ENCODE measurements at regions of chr11 and their contacts with region 1.

Region 1: DNA sequence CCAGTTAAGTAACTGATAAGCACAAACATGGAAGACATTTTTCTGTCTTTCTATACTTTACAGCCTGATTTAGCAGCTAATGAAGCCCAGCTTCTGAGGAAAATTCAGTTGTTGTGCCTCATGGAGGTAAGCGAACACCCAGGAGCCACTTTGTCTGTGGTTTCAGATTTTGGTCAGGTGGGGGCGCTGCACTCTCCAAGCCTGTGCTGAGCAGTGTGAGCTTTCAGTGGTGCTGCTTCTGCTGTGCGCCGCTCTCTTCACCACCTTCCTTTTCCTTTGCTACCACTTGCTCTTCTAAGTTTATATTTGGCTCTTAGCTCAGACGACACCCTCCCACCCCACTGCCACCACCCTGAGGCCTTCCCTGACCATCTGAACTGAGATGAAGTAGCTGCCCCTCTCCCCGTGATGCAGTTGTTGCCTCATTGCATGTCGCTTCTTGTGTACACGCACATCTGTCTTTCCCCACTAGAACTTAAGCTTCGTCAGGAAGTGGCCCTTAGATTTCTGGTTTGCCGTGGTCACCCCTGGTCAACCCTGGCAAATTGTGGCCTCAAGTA is 14.0 kb downstream of the PSMD13 start:
- DNase-seq: peak; percentile 74 to 89 (median 82)
- ATAC-seq: peak; percentile 100
- H3K4me3 ChIP-seq: no peak overlapping the region
- H3K4me3 Mint-ChIP-seq: peak overlapping the region; percentile 20
- H3K27ac ChIP-seq: no peak overlapping the region
- H3K27ac Mint-ChIP-seq: peak overlapping the region; percentile 76
- H3K4me1 ChIP-seq: peaks cover 6% of the 10 kb centered on the region
- H3K4me1 Mint-ChIP-seq: peaks cover 13% of the 10 kb centered on the region
- H3K27me3 ChIP-seq: no peaks in the 10 kb centered on the region
- H3K27me3 Mint-ChIP-seq: no peaks in the 10 kb centered on the region
- CTCF ChIP-seq: peak; percentile 78

Region 2: GRCh38 chr11:236774-237767 is 13.7 kb before region 1 on chr11 and contains the start of gene PSMD13:
- CTCF ChIA-PET with region 1: interaction called, 11 read pairs
- POLR2A ChIA-PET with region 1: interaction called, 9 read pairs
- intact Hi-C with region 1: no loop called
- DNase-seq: peak; percentile 76 to 94 (median 84)
- ATAC-seq: peak; percentile 79
- H3K4me3 ChIP-seq: peak within 1 kb of the TSS; percentile 91
- H3K4me3 Mint-ChIP-seq: peak within 1 kb of the TSS; percentile 100
- H3K27ac ChIP-seq: peak within 1 kb of the TSS; percentile 97 to 100
- H3K27ac Mint-ChIP-seq: peak within 1 kb of the TSS; percentile 91
- H3K4me1 ChIP-seq: peaks cover 27% of the 10 kb centered on the region
- H3K4me1 Mint-ChIP-seq: peaks cover 55% of the 10 kb centered on the region
- H3K27me3 ChIP-seq: no peaks in the 10 kb centered on the region
- H3K27me3 Mint-ChIP-seq: no peaks in the 10 kb centered on the region
- CTCF ChIP-seq: peak; percentile 31
- total RNA-seq, gene PSMD13: 56.9 to 57.8 TPM

Region 3: GRCh38 chr11:288328-289144 is 37.7 kb after region 1 on chr11 and contains the start of gene PGGHG:
- CTCF ChIA-PET with region 1: interaction called, 19 read pairs
- POLR2A ChIA-PET with region 1: interaction called, 51 read pairs
- intact Hi-C with region 1: loop called in 1 of 2 experiments (anchors 5 kb)
- DNase-seq: peak in 11 of 14 experiments; percentile 18 to 75 (median 57)
- ATAC-seq: peak; percentile 10
- H3K4me3 ChIP-seq: peak within 1 kb of the TSS; percentile 82
- H3K4me3 Mint-ChIP-seq: peak within 1 kb of the TSS; percentile 91
- H3K27ac ChIP-seq: peak within 1 kb of the TSS; percentile 72 to 98
- H3K27ac Mint-ChIP-seq: peak within 1 kb of the TSS; percentile 93
- H3K4me1 ChIP-seq: peaks cover 42% of the 10 kb centered on the region
- H3K4me1 Mint-ChIP-seq: peaks cover 34% of the 10 kb centered on the region
- H3K27me3 ChIP-seq: peaks cover 0 to 5% of the 10 kb centered on the region in 2 experiments
- H3K27me3 Mint-ChIP-seq: peaks cover 4% of the 10 kb centered on the region
- CTCF ChIP-seq: no peak
- total RNA-seq, gene PGGHG: 670 to 671 TPM

Region 4: DNA sequence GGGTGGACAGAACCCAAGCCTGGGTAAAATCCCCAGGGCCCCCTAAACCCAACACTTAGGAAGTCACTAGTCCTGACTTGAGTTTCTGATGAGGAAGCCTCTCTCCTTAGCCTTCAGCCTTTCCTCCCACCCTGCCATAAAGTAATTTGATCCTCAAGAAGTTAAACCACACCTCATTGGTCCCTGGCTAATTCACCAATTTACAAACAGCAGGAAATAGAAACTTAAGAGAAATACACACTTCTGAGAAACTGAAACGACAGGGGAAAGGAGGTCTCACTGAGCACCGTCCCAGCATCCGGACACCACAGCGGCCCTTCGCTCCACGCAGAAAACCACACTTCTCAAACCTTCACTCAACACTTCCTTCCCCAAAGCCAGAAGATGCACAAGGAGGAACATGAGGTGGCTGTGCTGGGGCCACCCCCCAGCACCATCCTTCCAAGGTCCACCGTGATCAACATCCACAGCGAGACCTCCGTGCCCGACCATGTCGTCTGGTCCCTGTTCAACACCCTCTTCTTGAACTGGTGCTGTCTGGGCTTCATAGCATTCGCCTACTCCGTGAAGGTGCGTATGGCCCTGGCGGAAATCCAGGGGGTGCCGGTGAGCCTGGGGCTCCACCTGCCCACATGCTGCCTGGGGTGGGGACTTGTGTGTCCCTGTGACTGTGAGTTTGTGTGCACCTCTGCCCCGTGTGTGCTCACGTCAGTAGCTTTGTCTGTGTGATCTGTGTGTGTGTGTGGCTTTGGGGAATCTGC is 63.1 kb after region 1 on chr11 and contains the start of gene IFITM1:
- CTCF ChIA-PET with region 1: interaction called, 13 read pairs
- POLR2A ChIA-PET with region 1: interaction called, 9 read pairs
- intact Hi-C with region 1: loop called in 1 of 2 experiments (anchors 2 kb)
- DNase-seq: peak in 13 of 14 experiments; percentile 40 to 89 (median 70)
- ATAC-seq: peak; percentile 62
- H3K4me3 ChIP-seq: peak within 1 kb of the TSS; percentile 90
- H3K4me3 Mint-ChIP-seq: peak within 1 kb of the TSS; percentile 97
- H3K27ac ChIP-seq: peak within 1 kb of the TSS; percentile 82 to 93
- H3K27ac Mint-ChIP-seq: peak within 1 kb of the TSS; percentile 98
- H3K4me1 ChIP-seq: peaks cover 56% of the 10 kb centered on the region
- H3K4me1 Mint-ChIP-seq: peaks cover 50% of the 10 kb centered on the region
- H3K27me3 ChIP-seq: no peaks in the 10 kb centered on the region
- H3K27me3 Mint-ChIP-seq: no peaks in the 10 kb centered on the region
- CTCF ChIP-seq: no peak
- total RNA-seq, gene IFITM1: 286 to 306 TPM

Region 5: DNA sequence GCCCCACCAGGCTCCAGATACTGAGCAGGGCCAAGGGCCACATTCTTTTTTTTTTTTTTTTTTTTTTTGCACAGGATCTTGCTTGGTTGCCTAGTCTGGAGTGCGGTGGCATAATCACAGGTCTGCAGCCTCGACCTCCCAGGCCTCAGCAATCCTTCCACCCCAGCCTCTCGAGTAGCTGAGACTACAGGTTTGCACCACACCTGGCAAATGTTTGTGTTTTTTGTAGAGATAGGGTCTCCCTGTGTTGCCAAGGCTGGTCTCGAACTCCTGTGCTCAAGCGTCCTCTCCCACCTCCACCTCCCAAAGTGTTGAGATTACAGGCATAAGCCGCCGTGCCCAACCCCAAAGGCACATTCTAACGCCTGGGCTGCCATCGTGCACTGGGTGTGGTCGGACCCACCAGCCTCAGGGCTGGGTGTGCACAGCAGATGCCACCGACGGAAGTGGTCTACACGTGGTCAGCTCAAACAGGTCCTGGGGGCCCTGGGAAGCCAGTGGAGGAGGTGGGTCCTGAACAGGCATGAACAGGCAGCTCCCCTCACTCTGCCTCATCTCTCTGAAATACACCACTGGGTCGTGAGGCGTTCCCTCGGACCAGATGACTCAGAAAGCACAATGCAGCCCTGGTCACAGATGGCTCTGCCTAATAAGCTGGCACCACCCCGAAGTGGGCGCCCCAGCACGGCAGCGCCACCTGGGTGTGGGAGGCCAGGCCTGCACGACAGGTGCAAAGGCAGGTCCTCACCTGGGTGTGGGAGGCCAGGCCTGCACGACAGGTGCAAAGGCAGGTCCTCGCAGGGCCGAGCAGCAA is 113.3 kb after region 1 on chr11:
- CTCF ChIA-PET with region 1: interaction called, 16 read pairs
- POLR2A ChIA-PET with region 1: no interaction called
- intact Hi-C with region 1: loop called (anchors 2 to 5 kb)
- DNase-seq: peak; percentile 46 to 80 (median 64)
- ATAC-seq: peak; percentile 80
- H3K4me3 ChIP-seq: no peak overlapping the region
- H3K4me3 Mint-ChIP-seq: no peak overlapping the region
- H3K27ac ChIP-seq: no peak overlapping the region
- H3K27ac Mint-ChIP-seq: no peak overlapping the region
- H3K4me1 ChIP-seq: peaks cover 19% of the 10 kb centered on the region
- H3K4me1 Mint-ChIP-seq: peaks cover 24% of the 10 kb centered on the region
- H3K27me3 ChIP-seq: peaks cover 17 to 25% of the 10 kb centered on the region in 2 experiments
- H3K27me3 Mint-ChIP-seq: peaks cover 35% of the 10 kb centered on the region
- CTCF ChIP-seq: peak; percentile 37

Region 6: GRCh38 chr11:447923-448731 is 197.3 kb after region 1 on chr11:
- CTCF ChIA-PET with region 1: interaction called, 9 read pairs
- POLR2A ChIA-PET with region 1: interaction called, 8 read pairs
- intact Hi-C with region 1: loop called (anchors 1 to 5 kb)
- DNase-seq: peak; percentile 91 to 98 (median 94)
- ATAC-seq: peak; percentile 66
- H3K4me3 ChIP-seq: peak overlapping the region; percentile 63
- H3K4me3 Mint-ChIP-seq: peak overlapping the region; percentile 93
- H3K27ac ChIP-seq: peak overlapping the region; percentile 84 to 89
- H3K27ac Mint-ChIP-seq: peak overlapping the region; percentile 95
- H3K4me1 ChIP-seq: peaks cover 38% of the 10 kb centered on the region
- H3K4me1 Mint-ChIP-seq: peaks cover 26% of the 10 kb centered on the region
- H3K27me3 ChIP-seq: no peaks in the 10 kb centered on the region
- H3K27me3 Mint-ChIP-seq: no peaks in the 10 kb centered on the region
- CTCF ChIP-seq: peak; percentile 93

Region 7: DNA sequence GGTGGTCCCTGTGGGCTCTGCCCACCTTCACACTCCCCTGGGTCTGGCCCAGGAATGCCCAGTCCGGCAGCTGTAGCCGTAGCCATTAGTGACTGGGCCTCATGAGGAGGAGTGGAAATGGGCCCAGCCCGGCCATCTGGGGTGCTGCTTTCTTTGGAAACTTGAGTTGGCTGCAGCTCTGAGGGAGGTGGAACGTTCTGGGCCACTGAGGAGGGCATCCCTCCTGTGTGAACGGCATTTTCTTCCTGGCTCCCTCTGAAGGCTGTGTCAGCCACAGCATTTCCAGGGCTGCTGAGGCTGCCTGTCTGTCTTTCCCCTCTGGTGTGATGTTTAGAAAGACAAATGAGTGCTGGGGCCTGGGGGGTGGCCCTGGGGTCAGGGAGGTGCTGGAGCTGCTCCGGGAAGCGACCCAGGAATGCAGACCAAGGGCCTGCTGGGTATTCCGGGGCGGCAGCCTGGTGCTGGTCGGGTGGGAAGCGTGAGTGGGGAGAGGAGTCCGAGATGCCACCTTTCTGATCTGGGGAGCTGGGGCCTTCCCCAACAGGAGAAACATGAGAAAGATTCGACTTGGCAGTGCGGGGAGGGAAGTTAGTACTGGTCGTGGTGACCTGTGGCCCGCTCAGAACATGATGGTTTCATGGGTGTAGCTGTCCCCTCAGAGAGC is 226.4 kb after region 1 on chr11:
- CTCF ChIA-PET with region 1: no interaction called
- POLR2A ChIA-PET with region 1: no interaction called
- intact Hi-C with region 1: no loop called
- DNase-seq: no peak
- ATAC-seq: no peak
- H3K4me3 ChIP-seq: no peak overlapping the region
- H3K4me3 Mint-ChIP-seq: no peak overlapping the region
- H3K27ac ChIP-seq: no peak overlapping the region
- H3K27ac Mint-ChIP-seq: no peak overlapping the region
- H3K4me1 ChIP-seq: no peaks in the 10 kb centered on the region
- H3K4me1 Mint-ChIP-seq: no peaks in the 10 kb centered on the region
- H3K27me3 ChIP-seq: no peaks in the 10 kb centered on the region
- H3K27me3 Mint-ChIP-seq: no peaks in the 10 kb centered on the region
- CTCF ChIP-seq: no peak

Measured in CD4-positive, alpha-beta T cell (primary cell).